HEK293 (cell line): ENCODE measurements at regions of chr14 and their contacts with region 1.

Region 1: GRCh38 chr14:68795597-68796417 is 2.9 kb upstream of the ZFP36L1 start:
- H3K4me3 ChIP-seq: peak overlapping the region; percentile 65
- H3K27ac ChIP-seq: peak overlapping the region; percentile 99
- H3K4me1 ChIP-seq: peaks cover 3% of the 10 kb centered on the region; the same call in 1 of the 2 replicates
- CTCF ChIP-seq: peak; percentile 74

Region 2: DNA sequence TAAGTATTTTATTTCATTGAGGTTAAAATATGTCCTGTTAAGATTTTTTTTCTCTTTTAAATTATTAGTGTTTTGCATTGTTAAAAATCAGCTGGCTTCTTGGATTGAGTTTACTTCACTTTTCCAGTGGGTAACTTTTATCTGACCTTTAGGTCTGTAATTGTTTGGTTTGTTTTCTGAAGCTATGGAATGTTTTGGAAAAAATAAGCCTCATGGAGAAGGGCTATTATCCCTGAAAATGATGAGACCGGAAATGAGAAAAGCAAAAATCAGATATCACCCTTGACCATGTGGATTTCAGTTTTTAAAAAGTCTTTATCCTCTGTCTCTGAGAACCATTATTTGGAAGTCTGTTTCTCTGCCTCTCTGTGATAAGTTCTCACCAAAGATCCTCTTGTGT is 795.3 kb before region 1 on chr14:
- CTCF ChIA-PET with region 1: no interaction called
- POLR2A ChIA-PET with region 1: interaction called, 13 read pairs
- H3K4me3 ChIP-seq: no peak overlapping the region
- H3K27ac ChIP-seq: no peak overlapping the region
- H3K4me1 ChIP-seq: peaks cover 16% of the 10 kb centered on the region
- CTCF ChIP-seq: no peak

Region 3: GRCh38 chr14:68762953-68763764 is 32.6 kb before region 1 on chr14:
- CTCF ChIA-PET with region 1: no interaction called
- POLR2A ChIA-PET with region 1: interaction called, 12 read pairs
- H3K4me3 ChIP-seq: no peak overlapping the region
- H3K27ac ChIP-seq: no peak overlapping the region
- H3K4me1 ChIP-seq: peaks cover 8% of the 10 kb centered on the region
- CTCF ChIP-seq: no peak

Region 4: GRCh38 chr14:68780358-68781160 is 15.2 kb before region 1 on chr14:
- CTCF ChIA-PET with region 1: interaction called, 3 read pairs
- POLR2A ChIA-PET with region 1: interaction called, 12 read pairs
- H3K4me3 ChIP-seq: no peak overlapping the region
- H3K27ac ChIP-seq: no peak overlapping the region
- H3K4me1 ChIP-seq: no peaks in the 10 kb centered on the region
- CTCF ChIP-seq: no peak

Region 5: GRCh38 chr14:68824517-68825347 is 28.9 kb after region 1 on chr14:
- CTCF ChIA-PET with region 1: interaction called, 10 read pairs
- POLR2A ChIA-PET with region 1: interaction called, 4 read pairs
- H3K4me3 ChIP-seq: no peak overlapping the region
- H3K27ac ChIP-seq: no peak overlapping the region; the same call in 1 of the 2 replicates
- H3K4me1 ChIP-seq: peaks cover 2% of the 10 kb centered on the region; the same call in 1 of the 2 replicates
- CTCF ChIP-seq: peak; percentile 75; the same call in 1 of the 2 replicates

Region 6: DNA sequence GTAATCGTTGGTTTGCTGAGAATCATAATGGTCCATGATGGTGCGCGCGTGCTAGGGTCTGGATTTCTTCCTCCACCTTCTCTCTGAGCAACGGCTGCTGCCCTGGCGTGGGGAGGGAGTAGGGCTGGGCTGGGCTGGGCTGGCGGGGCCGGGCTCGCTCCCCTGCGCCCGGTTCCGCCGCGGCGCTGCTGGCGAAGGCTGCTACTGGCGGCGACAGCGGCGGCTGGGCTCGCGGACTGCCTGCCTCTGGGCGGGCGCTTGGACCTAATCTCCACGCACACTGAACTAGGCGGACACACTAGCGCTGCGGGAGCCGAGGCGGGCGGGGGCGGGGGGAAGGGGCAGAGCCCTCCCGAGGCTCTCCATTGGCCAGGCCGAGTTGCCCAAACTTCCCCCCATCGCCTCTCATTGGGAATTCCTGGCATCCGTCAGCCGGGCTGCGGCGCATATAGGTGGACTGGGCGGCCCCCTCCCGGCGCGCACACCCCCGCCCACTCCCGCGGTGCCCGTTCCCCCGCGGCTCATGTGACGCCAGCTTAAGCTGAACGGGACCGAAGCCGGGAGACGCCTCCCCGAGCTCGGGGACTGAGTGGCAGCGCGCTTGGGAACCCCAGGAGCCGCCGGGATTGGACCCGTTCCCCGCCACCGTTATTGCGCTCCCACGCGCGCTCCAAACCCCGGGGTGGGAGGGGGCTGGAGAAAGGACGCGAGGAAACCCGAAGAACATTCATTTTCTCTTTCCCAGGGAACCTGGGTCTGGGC is 183.4 kb after region 1 on chr14 and contains the start of gene ACTN1:
- CTCF ChIA-PET with region 1: no interaction called
- POLR2A ChIA-PET with region 1: interaction called, 13 read pairs
- H3K4me3 ChIP-seq: peak within 1 kb of the TSS; percentile 96
- H3K27ac ChIP-seq: peak within 1 kb of the TSS; percentile 95
- H3K4me1 ChIP-seq: peaks cover 10% of the 10 kb centered on the region
- CTCF ChIP-seq: no peak